ENCODE measurements at regions of chr18 and their contacts with region 1.

Region 1: DNA sequence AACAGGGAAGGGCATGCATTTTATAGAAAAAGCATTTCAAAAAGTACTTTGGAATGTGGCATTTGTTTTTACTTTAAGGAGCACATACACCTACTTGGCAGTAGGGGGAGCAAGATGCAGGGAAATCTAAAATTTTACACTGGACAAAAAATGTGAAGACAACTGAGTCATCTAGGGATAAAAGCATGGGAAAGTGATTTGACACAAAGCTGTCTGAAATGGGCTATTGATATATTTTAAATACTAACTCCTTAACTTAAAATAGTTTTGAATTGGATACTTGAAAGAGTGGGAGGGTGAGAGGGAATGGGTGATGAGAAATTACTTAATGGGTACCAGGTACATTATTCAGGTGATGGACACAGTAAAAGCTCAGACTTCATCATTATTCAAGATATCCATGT is 15.8 kb downstream of the TMEM200C start:
- DNase-seq: peak; percentile 0
- H3K4me3 Mint-ChIP-seq: no peak overlapping the region
- H3K27ac Mint-ChIP-seq: no peak overlapping the region
- H3K4me1 Mint-ChIP-seq: no peaks in the 10 kb centered on the region
- H3K27me3 Mint-ChIP-seq: peaks cover 46% of the 10 kb centered on the region
- CTCF ChIP-seq: peak; percentile 74

Region 2: DNA sequence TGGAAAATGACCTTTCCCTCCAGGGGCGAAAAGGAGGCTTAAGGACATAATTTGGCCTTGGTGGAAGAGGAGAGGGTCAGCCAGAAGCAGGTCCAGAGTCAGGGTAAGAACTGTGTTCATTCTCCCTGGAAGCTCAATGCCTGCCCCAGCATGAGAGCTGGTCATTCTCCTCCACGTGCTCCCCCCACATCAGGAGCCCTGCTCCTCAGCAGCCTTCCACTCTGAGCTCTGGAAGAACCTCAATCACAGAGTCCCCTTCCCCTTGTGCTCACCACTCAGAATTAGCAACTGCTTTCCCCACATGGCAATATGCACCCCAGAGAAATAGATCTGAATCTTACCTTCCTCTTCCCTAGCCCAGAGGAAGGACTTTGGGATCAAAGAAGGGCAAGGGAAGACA is 99.6 kb before region 1 on chr18:
- CTCF ChIA-PET with region 1: no interaction called
- POLR2A ChIA-PET with region 1: no interaction called
- intact Hi-C with region 1: no loop called
- DNase-seq: no peak
- H3K4me3 Mint-ChIP-seq: no peak overlapping the region
- H3K27ac Mint-ChIP-seq: no peak overlapping the region
- H3K4me1 Mint-ChIP-seq: no peaks in the 10 kb centered on the region
- H3K27me3 Mint-ChIP-seq: no peaks in the 10 kb centered on the region
- CTCF ChIP-seq: no peak

Region 3: GRCh38 chr18:5868218-5869115 is 11.0 kb before region 1 on chr18:
- CTCF ChIA-PET with region 1: interaction called, 18 read pairs
- POLR2A ChIA-PET with region 1: no interaction called
- intact Hi-C with region 1: no loop called
- DNase-seq: peak; percentile 42
- H3K4me3 Mint-ChIP-seq: no peak overlapping the region
- H3K27ac Mint-ChIP-seq: no peak overlapping the region
- H3K4me1 Mint-ChIP-seq: no peaks in the 10 kb centered on the region
- H3K27me3 Mint-ChIP-seq: peaks cover 20% of the 10 kb centered on the region
- CTCF ChIP-seq: peak; percentile 79

Region 4: DNA sequence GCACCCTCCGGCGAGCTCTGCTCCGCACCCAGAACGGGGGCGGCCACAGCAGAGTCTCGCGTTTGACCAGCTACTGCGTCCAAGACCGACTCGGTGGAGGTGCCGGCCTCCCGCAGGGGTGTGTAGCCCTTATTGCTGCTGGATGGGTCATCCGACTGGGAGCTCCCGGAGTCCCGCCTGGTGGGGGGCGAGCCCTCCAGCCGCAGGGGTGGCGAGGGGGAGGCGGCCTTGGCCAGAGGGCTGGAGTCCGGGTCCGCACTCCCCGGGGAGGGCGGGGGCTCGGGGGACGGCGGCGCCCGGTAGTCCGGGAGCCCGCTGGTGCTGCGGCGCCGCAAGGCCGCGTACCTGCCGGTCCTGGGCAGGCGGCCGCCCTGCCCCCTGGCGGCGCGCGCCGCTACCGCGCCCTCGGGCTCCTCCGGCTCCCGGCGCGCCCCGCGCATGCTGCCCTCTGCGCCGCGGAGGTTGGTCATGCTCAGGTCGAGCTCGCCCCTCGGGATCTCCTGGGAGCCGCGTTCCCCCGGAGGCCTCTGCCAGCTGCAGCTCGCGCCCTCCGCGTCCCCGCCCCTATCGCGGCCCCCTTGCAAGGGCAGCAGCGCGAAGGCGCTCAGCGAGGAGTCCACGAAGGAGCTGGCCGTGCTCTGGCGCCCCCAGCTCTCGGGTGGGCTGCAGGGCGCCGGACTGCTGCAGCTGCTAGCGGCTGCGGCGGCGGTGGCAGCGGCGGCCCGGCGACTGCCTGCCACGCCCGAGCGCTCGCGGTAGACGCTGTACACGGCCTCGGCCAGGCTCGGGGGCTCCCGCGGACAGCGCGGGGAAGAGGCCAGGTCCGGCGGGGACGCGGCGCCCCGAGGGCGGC is 11.1 kb after region 1 on chr18:
- CTCF ChIA-PET with region 1: interaction called, 19 read pairs
- POLR2A ChIA-PET with region 1: no interaction called
- intact Hi-C with region 1: no loop called
- DNase-seq: no peak
- H3K4me3 Mint-ChIP-seq: no peak overlapping the region
- H3K27ac Mint-ChIP-seq: no peak overlapping the region
- H3K4me1 Mint-ChIP-seq: no peaks in the 10 kb centered on the region
- H3K27me3 Mint-ChIP-seq: peaks cover 36% of the 10 kb centered on the region
- CTCF ChIP-seq: no peak

Region 5: GRCh38 chr18:5975111-5976002 is 95.9 kb after region 1 on chr18:
- CTCF ChIA-PET with region 1: interaction called, 4 read pairs
- POLR2A ChIA-PET with region 1: no interaction called
- intact Hi-C with region 1: loop called (anchors 1 kb)
- DNase-seq: no peak
- H3K4me3 Mint-ChIP-seq: no peak overlapping the region
- H3K27ac Mint-ChIP-seq: no peak overlapping the region
- H3K4me1 Mint-ChIP-seq: peaks cover 9% of the 10 kb centered on the region
- H3K27me3 Mint-ChIP-seq: peaks cover 29% of the 10 kb centered on the region
- CTCF ChIP-seq: no peak

Region 6: GRCh38 chr18:6219116-6219717 is 339.7 kb after region 1 on chr18:
- CTCF ChIA-PET with region 1: no interaction called
- POLR2A ChIA-PET with region 1: no interaction called
- intact Hi-C with region 1: loop called (anchors 1 kb)
- DNase-seq: no peak
- H3K4me3 Mint-ChIP-seq: no peak overlapping the region
- H3K27ac Mint-ChIP-seq: no peak overlapping the region
- H3K4me1 Mint-ChIP-seq: no peaks in the 10 kb centered on the region
- H3K27me3 Mint-ChIP-seq: no peaks in the 10 kb centered on the region
- CTCF ChIP-seq: peak; percentile 48

Region 7: DNA sequence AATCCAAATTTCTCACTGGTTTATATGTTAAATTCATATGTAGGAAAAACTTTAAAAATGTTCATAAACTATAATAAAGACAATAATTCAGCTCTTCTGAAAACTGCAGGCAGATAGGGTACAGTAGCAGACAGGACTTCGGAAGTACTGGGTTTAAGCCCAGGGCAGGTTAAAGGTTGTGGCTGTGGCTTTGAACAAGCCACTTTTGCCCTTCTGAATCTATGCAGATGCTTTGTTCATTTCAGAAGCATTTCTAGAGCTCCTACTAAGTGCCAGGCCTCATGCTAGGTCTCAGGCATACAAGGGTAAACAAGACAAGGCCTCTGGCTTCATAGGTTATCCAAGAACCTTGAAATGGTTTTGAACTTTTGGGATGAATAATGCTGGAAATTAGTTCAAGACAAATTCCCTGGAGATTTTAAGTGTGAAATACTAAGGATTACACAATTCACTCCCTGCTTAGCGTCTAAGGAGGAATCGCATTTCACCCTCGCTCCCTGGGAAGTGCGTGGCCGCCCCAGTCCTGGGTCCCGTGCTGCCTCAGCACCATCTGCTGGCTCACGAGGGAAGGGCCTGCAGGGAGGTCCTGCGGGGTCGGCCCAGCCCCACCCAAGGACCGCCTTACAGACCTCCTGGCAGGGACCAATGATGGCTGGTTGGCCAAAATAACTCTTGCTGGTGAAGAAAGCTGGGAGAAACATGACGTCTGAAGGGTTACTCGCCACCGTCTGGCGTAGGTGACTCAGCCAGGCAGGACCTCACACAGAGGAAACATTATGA is 602.9 kb after region 1 on chr18:
- CTCF ChIA-PET with region 1: interaction called, 3 read pairs
- POLR2A ChIA-PET with region 1: no interaction called
- intact Hi-C with region 1: loop called (anchors 1 kb)
- DNase-seq: peak; percentile 65
- H3K4me3 Mint-ChIP-seq: peak overlapping the region; percentile 30
- H3K27ac Mint-ChIP-seq: no peak overlapping the region
- H3K4me1 Mint-ChIP-seq: peaks cover 14% of the 10 kb centered on the region
- H3K27me3 Mint-ChIP-seq: no peaks in the 10 kb centered on the region
- CTCF ChIP-seq: peak; percentile 61

Region 8: GRCh38 chr18:6521795-6522418 is 642.4 kb after region 1 on chr18:
- CTCF ChIA-PET with region 1: interaction called, 24 read pairs
- POLR2A ChIA-PET with region 1: no interaction called
- intact Hi-C with region 1: loop called (anchors 1 kb)
- DNase-seq: peak; percentile 39
- H3K4me3 Mint-ChIP-seq: no peak overlapping the region
- H3K27ac Mint-ChIP-seq: no peak overlapping the region
- H3K4me1 Mint-ChIP-seq: no peaks in the 10 kb centered on the region
- H3K27me3 Mint-ChIP-seq: peaks cover 23% of the 10 kb centered on the region
- CTCF ChIP-seq: peak; percentile 89

Measured in MCF 10A (cell line).